Calu3 (cell line): ENCODE measurements at regions of chr3 and their contacts with region 1.

Region 1: DNA sequence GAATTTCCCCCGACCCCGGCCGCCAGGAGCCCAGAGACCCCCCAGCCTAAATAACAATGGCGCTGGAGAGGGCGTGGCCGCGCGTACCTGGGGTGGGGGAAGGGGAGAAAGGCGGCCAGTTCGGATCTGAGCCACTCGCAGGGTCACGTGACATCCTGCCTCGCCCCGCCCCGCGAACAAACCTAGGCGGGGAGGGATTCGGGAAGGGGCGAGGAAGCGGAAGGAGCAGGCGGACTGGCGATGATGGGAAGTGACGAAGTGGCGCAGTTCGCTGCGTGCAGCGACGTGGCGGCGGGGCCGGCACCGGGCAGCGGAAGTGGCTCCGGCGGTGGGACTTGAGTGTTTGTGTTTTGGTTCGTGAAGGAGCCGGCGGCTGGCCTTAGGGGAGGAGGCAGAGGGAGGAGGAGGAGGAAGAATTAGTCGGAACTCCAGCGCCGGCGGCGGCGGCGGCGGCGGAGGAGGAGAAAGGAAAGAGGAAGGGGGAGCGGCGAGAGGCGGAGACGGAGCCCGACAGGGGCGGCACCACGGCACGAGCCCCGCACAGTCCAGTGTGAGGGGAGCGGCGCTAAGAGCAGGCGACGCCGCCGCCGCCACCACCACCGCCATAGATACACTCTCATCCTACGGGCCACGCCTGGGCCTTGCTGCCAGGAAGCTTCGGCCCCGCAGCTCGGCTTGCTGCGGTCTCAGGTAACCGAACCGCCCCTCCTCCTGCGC is at the start of gene RAB5A:
- DNase-seq: peak; percentile 98
- H3K4me3 Mint-ChIP-seq: peak within 1 kb of the TSS; percentile 77
- H3K27ac Mint-ChIP-seq: peak within 1 kb of the TSS; percentile 72
- H3K4me1 Mint-ChIP-seq: peaks cover 20% of the 10 kb centered on the region
- H3K27me3 Mint-ChIP-seq: no peaks in the 10 kb centered on the region
- CTCF ChIP-seq: no peak
- total RNA-seq, gene RAB5A: 66.7 and 75.4 TPM in 2 replicates

Region 2: DNA sequence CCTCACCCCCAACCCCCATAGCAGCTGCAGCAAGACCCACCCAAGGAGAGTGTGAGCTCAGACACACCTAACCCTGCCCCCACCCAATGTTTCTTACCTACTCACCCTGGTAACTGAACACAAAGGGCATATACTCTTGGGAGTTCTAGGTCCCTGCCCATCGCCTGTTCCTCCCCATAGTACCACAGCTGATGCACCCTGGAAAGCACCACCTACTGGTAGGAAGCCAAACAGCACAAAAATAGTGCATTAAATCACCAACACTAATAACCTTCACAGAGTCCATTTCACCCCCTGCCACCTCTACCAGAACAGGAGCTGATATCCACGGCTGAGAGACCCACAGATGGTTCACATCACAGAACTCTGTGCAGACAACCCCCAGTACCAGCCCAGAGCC is 258.2 kb before region 1 on chr3:
- CTCF ChIA-PET with region 1: no interaction called
- intact Hi-C with region 1: no loop called
- DNase-seq: no peak
- H3K4me3 Mint-ChIP-seq: no peak overlapping the region
- H3K27ac Mint-ChIP-seq: no peak overlapping the region
- H3K4me1 Mint-ChIP-seq: no peaks in the 10 kb centered on the region
- H3K27me3 Mint-ChIP-seq: no peaks in the 10 kb centered on the region
- CTCF ChIP-seq: no peak

Region 3: GRCh38 chr3:19901337-19901736 is 45.7 kb before region 1 on chr3:
- CTCF ChIA-PET with region 1: no interaction called
- intact Hi-C with region 1: loop called (anchors 1 kb)
- DNase-seq: peak; percentile 37
- H3K4me3 Mint-ChIP-seq: peak overlapping the region; percentile 11
- H3K27ac Mint-ChIP-seq: peak overlapping the region; percentile 38
- H3K4me1 Mint-ChIP-seq: peaks cover 14% of the 10 kb centered on the region
- H3K27me3 Mint-ChIP-seq: no peaks in the 10 kb centered on the region
- CTCF ChIP-seq: no peak

Region 4: GRCh38 chr3:20039766-20040475 is 92.9 kb after region 1 on chr3 and contains the start of gene KAT2B:
- CTCF ChIA-PET with region 1: no interaction called
- intact Hi-C with region 1: loop called (anchors 5 kb)
- DNase-seq: peak; percentile 82
- H3K4me3 Mint-ChIP-seq: peak within 1 kb of the TSS; percentile 84
- H3K27ac Mint-ChIP-seq: peak within 1 kb of the TSS; percentile 89
- H3K4me1 Mint-ChIP-seq: peaks cover 38% of the 10 kb centered on the region
- H3K27me3 Mint-ChIP-seq: no peaks in the 10 kb centered on the region
- CTCF ChIP-seq: peak; percentile 83
- total RNA-seq, gene KAT2B: 12.0 and 13.8 TPM in 2 replicates

Region 5: DNA sequence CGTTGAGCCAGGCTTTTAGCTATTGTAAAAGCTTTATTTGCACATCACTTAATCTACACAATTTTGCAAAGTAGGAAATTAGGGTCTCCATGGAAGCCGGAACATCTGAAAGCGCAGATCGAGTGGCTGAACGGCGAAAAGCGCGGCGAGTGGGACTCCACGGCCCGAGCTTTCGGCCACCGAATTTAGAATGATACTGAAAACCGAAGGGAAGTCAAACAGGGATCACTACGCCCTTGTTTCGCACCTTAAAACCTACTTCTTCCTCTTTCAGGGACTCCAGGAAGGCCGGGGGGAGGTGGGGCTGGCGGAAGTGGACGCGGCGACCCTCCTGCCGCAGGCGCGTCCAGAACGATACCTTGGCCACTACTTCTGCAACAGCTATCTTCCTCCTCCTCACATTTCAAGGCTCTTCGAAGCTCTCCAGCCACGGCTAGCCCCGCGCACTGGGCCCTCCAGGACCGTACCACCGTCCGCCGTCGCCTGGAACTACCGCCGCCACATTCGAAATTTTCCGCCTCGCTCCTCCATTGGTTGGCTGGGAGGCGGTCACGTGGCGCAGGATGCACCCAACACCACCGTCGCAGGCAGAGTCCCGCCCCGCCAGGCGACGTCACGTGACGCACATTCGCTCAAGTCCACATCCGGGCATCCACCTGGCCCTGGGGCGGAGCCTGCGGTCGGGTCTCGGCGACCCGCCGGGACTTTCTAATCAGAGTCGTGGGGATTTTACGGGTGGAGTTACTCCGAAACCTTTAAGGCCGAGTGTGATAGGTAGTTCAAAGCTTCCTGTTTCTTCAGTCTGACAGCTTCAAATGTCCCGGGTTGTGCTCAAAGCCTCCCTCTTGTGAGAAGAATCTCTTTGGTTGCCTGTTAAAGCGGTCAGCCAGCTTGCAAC is 239.0 kb after region 1 on chr3 and contains the start of gene SGO1:
- CTCF ChIA-PET with region 1: no interaction called
- intact Hi-C with region 1: loop called (anchors 10 kb)
- DNase-seq: peak; percentile 98
- H3K4me3 Mint-ChIP-seq: no peak within 1 kb of the TSS
- H3K27ac Mint-ChIP-seq: no peak within 1 kb of the TSS
- H3K4me1 Mint-ChIP-seq: no peaks in the 10 kb centered on the region
- H3K27me3 Mint-ChIP-seq: no peaks in the 10 kb centered on the region
- CTCF ChIP-seq: no peak
- total RNA-seq, gene SGO1: 29.4 and 30.2 TPM in 2 replicates